Ascending aorta (tissue), 2 donors: ENCODE measurements at regions of chr15 and their contacts with region 1.

Region 1: DNA sequence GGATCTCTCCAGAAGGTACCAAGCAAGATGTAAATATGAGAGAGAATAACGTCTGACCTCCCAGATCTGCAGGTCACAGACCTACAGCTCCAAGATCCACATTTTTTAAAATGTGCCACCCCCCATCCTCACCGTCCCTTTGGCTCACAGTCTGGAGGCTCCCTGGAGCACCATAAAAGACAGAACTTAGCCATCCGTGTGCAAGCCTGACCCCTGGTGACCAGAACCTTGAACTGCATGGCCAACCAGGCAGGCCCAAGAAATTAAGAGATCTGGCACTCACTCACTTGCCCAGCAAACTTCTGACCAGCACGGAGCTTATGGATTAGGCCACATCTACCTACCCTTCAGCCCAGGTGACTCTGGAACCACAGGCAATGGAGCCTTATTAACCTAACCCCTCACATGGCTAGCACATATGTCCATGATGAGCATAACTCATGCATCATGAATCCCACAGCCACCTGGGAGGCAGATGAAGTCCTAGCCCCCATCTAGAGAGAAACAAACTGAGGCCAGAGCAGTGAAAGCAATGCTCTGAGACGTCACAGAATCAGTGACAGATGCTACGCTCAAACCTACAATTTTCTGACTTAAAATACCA is 275.3 kb downstream of the UACA start:
- DNase-seq: peak in 1 of 2 donors; percentile 87
- H3K4me3 ChIP-seq: no peak overlapping the region
- H3K27ac ChIP-seq: no peak overlapping the region
- H3K4me1 ChIP-seq: no peaks in the 10 kb centered on the region
- H3K27me3 ChIP-seq: no peaks in the 10 kb centered on the region
- CTCF ChIP-seq: peak; percentile 92 to 99 (median 98)

Region 2: DNA sequence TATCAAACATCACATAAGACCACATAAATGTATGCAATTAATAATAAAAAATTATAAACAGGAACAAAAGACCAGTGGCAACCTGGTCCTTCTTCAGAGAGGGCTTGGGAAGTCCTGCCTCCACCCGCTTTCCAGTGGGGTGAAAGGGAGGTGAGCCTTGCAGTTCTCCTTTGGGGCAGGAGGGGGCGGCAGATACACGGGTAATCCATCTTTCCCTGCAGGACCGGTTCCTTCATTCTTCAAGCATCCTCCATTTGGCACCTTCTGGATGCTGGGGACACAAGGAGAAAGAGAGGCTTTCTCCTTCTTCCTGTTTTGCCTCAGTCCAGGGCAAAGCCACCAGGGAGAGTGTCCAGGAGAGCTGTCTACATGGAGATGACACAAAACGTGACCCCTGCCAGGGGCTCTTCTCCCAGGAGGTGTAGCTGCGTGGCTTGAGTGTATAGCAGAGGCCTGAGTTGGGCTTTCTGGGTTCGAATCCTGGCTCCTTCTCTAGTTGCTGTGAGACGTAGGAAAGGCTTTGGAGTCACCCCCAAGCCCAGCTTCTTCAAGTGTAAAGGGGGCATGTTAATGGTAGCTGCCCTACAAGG is 1012.2 kb before region 1 on chr15:
- intact Hi-C with region 1: loop called (anchors 2 kb)
- DNase-seq: peak; percentile 18 to 83
- H3K4me3 ChIP-seq: no peak overlapping the region
- H3K27ac ChIP-seq: no peak overlapping the region
- H3K4me1 ChIP-seq: no peaks in the 10 kb centered on the region
- H3K27me3 ChIP-seq: no peaks in the 10 kb centered on the region
- CTCF ChIP-seq: peak; percentile 82 to 93 (median 92)

Region 3: GRCh38 chr15:69523010-69524001 is 964.8 kb before region 1 on chr15:
- intact Hi-C with region 1: loop called (anchors 5 kb)
- DNase-seq: peak; percentile 22 to 78
- H3K4me3 ChIP-seq: no peak overlapping the region
- H3K27ac ChIP-seq: no peak overlapping the region
- H3K4me1 ChIP-seq: no peaks in the 10 kb centered on the region
- H3K27me3 ChIP-seq: no peaks in the 10 kb centered on the region
- CTCF ChIP-seq: peak; percentile 46 to 67 (median 59)

Region 4: GRCh38 chr15:70466895-70467529 is 21.1 kb before region 1 on chr15:
- intact Hi-C with region 1: no loop called
- DNase-seq: no peak
- H3K4me3 ChIP-seq: no peak overlapping the region
- H3K27ac ChIP-seq: no peak overlapping the region
- H3K4me1 ChIP-seq: no peaks in the 10 kb centered on the region
- H3K27me3 ChIP-seq: no peaks in the 10 kb centered on the region
- CTCF ChIP-seq: peak; percentile 32 to 57 (median 32)

Region 5: DNA sequence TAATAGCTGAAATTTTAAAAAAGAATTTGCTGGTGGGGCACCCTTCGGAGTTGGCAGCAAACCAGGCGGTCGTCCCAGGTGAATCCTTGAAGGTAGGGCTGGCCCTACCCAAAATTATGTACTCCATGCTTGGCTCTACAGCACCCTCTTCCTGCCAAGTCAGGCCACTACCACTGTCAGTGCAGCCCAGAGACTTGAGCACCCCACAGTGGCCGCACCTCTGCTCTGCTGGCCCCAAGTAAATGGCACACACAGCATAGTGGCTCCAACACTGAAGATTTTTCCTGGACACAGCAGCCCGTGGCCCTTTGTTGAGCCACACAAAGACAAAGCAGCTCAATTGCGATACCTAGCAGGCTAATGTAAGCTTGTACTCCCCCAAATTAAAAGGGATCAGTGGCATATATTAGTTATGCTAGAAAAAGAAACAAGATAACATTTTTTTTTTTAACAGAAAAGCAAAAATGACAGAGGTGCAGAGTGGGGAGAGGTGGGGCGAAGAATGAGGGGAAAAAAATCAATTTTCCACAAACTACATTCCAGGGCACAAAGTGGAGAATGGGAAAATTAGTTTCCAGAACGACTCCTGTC is 24.8 kb after region 1 on chr15:
- intact Hi-C with region 1: no loop called
- DNase-seq: no peak
- H3K4me3 ChIP-seq: no peak overlapping the region
- H3K27ac ChIP-seq: no peak overlapping the region
- H3K4me1 ChIP-seq: no peaks in the 10 kb centered on the region
- H3K27me3 ChIP-seq: no peaks in the 10 kb centered on the region
- CTCF ChIP-seq: peak in 1 of 3 experiments; percentile 37